Naive thymus-derived CD4-positive, alpha-beta T cell (primary cell): ENCODE measurements at regions of chr6 and their contacts with region 1.

Region 1: DNA sequence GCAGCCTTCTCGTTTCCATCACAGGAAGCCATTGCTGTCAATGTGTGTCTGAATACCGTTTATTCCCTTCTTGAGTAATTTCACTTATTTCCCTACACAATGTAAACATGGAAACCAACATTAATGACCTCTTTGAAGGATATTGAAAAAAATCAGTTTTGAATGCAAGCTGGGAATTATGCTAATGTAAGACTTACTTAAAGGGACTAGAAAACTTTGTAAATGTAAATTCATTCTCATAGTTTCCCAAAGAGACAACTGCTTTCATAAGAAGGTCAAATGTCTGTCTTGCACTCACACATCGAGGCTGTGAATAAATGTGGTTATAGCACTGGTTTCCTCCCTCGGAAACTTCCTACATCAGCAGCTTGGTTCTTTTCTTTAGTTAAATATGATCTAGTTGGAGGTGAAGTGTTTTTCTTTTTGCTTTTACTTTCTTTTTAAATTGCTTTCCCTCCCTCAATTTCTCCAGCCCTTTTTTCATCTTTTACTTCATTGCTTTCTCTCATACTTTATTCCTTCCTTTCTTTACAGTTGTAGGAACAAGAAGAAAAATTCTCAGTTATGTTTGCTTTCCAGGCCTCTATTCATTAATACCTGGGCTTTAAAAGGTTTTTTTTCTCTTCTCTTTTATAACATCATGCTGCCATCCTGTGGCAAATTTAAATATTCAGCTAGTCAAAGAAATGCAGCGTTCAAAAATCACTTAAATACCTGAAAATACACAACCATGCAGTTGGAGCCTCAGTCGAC is 108.3 kb downstream of the TNFAIP3 start:
- DNase-seq: peak in 7 of 9 donors; percentile 22 to 65 (median 51)
- ATAC-seq: peak; percentile 85
- H3K4me3 ChIP-seq: peak overlapping the region; percentile 5
- H3K4me3 Mint-ChIP-seq: peak overlapping the region; percentile 9 to 92 (median 78)
- H3K27ac ChIP-seq: peak overlapping the region; percentile 66
- H3K27ac Mint-ChIP-seq: peak overlapping the region; percentile 91 to 99 (median 94)
- H3K4me1 ChIP-seq: peaks cover 17 to 41% of the 10 kb centered on the region in 2 donors
- H3K4me1 Mint-ChIP-seq: peaks cover 23 to 55% (median 31%) of the 10 kb centered on the region in 7 donors
- H3K27me3 ChIP-seq: no peaks in the 10 kb centered on the region
- H3K27me3 Mint-ChIP-seq: no peaks in the 10 kb centered on the region

Region 2: DNA sequence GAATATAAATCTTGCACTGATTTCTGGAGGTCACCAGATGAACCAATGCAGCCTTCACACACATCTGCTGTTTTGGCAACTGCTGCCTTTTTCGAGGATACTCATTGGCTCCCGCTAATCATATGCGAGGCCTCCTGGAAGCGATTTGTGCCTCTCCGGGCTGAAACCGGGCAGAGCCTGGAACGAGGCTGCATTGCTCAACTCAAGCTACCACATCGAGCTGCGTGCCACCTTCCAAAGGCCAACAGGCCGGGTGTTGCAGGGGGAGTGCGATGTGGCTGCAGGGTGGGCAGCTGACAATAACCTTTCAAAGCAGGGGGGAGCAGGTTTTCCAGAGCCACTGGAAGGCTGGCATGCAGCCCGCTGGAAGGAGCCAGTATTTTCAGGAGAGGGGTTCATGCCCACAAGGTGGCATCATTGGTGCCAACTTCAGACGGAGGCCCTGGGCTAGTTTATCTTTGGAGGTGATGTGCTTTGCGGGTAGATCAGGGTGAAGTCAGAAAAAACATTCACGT is 633.6 kb before region 1 on chr6:
- CTCF ChIA-PET with region 1: no interaction called
- POLR2A ChIA-PET with region 1: no interaction called
- intact Hi-C with region 1: loop called in 1 of 2 experiments (anchors 5 kb)
- DNase-seq: peak in 8 of 9 donors; percentile 16 to 62 (median 48)
- ATAC-seq: peak; percentile 80
- H3K4me3 ChIP-seq: peak overlapping the region; percentile 24
- H3K4me3 Mint-ChIP-seq: peak overlapping the region in 9 of 10 donors; percentile 52 to 87 (median 77)
- H3K27ac ChIP-seq: no peak overlapping the region
- H3K27ac Mint-ChIP-seq: peak overlapping the region in 1 of 9 donors; percentile 76
- H3K4me1 ChIP-seq: peaks cover 5 to 10% of the 10 kb centered on the region in 2 donors
- H3K4me1 Mint-ChIP-seq: peaks cover 6 to 19% (median 17%) of the 10 kb centered on the region in 7 donors
- H3K27me3 ChIP-seq: no peaks in the 10 kb centered on the region
- H3K27me3 Mint-ChIP-seq: peaks cover 0 to 55% (median 0%) of the 10 kb centered on the region in 5 donors

Region 3: DNA sequence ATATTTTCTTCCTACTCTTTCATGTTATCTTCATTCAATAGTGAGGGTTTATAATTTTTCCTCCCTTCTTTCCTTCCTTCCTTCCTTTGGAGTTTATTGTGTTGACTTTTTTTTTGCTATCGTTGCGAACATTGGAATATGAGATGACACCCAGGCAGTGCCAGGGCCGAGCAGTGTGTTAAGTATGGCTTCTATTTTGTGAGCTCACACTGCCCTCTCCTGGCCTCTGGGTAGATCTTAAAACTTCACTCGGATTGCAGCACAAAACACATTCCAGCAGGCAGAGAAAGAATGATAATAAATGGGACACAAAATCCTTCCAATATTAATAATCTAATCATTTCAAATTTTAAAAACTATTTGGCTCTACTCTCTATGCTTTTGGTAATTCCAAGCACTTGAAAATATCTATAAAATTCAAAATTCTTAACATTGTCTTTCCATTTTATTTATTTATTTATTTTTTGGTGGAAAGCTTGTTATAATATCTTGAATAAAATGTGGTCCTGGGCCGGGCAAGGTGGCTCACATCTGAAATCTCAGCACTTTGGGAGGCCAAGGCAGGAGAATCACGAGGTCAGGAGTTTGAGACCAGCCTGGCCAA is 333.8 kb before region 1 on chr6:
- CTCF ChIA-PET with region 1: interaction called, 3 read pairs
- POLR2A ChIA-PET with region 1: no interaction called
- intact Hi-C with region 1: loop called in 1 of 2 experiments (anchors 1 kb)
- DNase-seq: peak; percentile 25 to 65 (median 57)
- ATAC-seq: peak; percentile 89
- H3K4me3 ChIP-seq: no peak overlapping the region
- H3K4me3 Mint-ChIP-seq: no peak overlapping the region
- H3K27ac ChIP-seq: no peak overlapping the region
- H3K27ac Mint-ChIP-seq: no peak overlapping the region
- H3K4me1 ChIP-seq: no peaks in the 10 kb centered on the region
- H3K4me1 Mint-ChIP-seq: peaks cover 0 to 17% (median 12%) of the 10 kb centered on the region in 7 donors
- H3K27me3 ChIP-seq: no peaks in the 10 kb centered on the region
- H3K27me3 Mint-ChIP-seq: peaks cover 0 to 13% (median 6%) of the 10 kb centered on the region in 5 donors

Region 4: GRCh38 chr6:137823826-137824555 is 151.4 kb before region 1 on chr6:
- CTCF ChIA-PET with region 1: no interaction called
- POLR2A ChIA-PET with region 1: no interaction called
- intact Hi-C with region 1: loop called in 1 of 2 experiments (anchors 1 kb)
- DNase-seq: peak; percentile 59 to 100 (median 95)
- ATAC-seq: peak; percentile 87
- H3K4me3 ChIP-seq: peak overlapping the region; percentile 33
- H3K4me3 Mint-ChIP-seq: peak overlapping the region; percentile 72 to 86 (median 79)
- H3K27ac ChIP-seq: peak overlapping the region; percentile 99
- H3K27ac Mint-ChIP-seq: peak overlapping the region; percentile 96 to 100 (median 100)
- H3K4me1 ChIP-seq: peaks cover 43 to 76% of the 10 kb centered on the region in 2 donors
- H3K4me1 Mint-ChIP-seq: peaks cover 48 to 98% (median 93%) of the 10 kb centered on the region in 7 donors
- H3K27me3 ChIP-seq: no peaks in the 10 kb centered on the region
- H3K27me3 Mint-ChIP-seq: no peaks in the 10 kb centered on the region

Region 5: DNA sequence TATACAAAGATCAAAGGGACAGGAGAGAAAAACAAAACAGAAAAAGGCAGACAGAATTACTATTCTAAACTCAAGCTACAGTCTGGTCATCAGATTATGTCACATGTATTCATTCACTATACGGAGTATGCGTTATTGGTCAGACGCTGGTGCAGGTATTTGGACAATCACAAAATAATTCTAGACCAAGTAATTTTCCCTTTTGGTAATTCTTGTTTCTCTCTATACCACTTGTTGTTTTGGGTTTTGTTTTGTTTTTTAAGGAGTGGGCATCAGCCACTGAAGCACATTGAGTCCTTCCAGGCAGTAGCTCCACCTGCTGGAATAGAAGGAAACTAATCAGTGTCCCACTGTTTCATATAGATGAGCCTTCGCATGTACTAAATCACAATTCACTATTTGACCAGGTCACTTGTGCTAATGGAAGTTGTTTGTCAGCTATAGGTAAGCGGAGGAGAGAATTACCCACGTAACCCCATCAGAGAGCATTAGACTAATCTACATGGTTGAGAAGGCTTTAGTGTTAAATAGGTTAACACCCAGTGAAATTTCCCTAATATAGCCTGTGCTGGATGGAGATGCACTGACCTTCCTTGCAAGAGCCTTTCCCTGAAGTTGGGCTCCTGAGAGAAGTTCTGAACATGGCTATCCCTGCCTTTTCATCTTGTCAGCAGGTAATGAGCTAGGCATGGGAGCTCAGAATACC is 30.4 kb before region 1 on chr6:
- CTCF ChIA-PET with region 1: interaction called, 11 read pairs
- POLR2A ChIA-PET with region 1: no interaction called
- intact Hi-C with region 1: loop called (anchors 1 kb)
- DNase-seq: peak in 6 of 9 donors; percentile 7 to 52 (median 39)
- ATAC-seq: peak; percentile 88
- H3K4me3 ChIP-seq: no peak overlapping the region
- H3K4me3 Mint-ChIP-seq: no peak overlapping the region
- H3K27ac ChIP-seq: no peak overlapping the region
- H3K27ac Mint-ChIP-seq: peak overlapping the region in 3 of 9 donors; percentile 45 to 76 (median 59)
- H3K4me1 ChIP-seq: peaks cover 1 to 7% of the 10 kb centered on the region in 2 donors
- H3K4me1 Mint-ChIP-seq: peaks cover 4 to 48% (median 18%) of the 10 kb centered on the region in 7 donors
- H3K27me3 ChIP-seq: no peaks in the 10 kb centered on the region
- H3K27me3 Mint-ChIP-seq: no peaks in the 10 kb centered on the region

Region 6: DNA sequence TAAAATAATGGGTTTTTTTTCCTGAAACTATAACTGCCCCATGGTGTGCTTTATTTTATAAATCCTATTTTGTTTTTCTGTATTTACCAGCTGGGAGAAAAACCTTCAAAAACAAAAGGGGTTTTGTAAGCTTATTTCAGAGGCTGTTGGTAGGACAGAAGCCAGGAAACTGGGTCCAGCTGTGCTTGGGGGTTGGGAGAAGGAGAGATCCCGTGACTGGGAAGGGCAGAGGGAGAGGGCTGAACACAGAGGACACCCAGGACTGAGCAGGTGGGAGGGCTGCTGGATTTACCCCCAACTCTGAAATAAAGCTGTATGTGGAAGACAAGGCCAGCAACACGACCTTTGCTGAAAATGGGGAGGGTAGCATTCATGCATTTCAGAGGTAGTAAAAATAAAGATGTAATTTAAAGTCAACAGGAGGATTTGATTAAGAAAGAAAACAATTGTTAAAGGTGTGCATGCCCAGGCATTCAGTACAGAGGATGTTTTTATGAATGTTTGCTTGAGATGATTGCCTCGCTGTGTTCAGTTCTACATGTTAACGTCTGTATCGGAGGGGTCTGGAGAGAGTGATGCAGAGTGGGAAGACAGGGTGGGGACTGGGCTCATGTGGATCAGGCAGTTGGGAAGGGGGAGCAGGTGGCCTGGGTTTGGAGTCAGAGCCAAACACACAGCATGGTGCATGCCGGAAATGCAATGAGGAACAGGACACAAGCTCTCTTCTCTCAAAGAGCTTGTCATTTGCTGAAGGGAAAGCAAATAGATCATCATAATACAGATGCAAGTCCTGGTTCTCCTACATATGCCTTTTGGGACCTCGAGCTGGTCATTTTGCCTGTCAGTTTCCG is 207.8 kb after region 1 on chr6:
- CTCF ChIA-PET with region 1: no interaction called
- POLR2A ChIA-PET with region 1: no interaction called
- intact Hi-C with region 1: no loop called
- DNase-seq: no peak
- ATAC-seq: no peak
- H3K4me3 ChIP-seq: no peak overlapping the region
- H3K4me3 Mint-ChIP-seq: no peak overlapping the region
- H3K27ac ChIP-seq: no peak overlapping the region
- H3K27ac Mint-ChIP-seq: no peak overlapping the region
- H3K4me1 ChIP-seq: no peaks in the 10 kb centered on the region
- H3K4me1 Mint-ChIP-seq: no peaks in the 10 kb centered on the region
- H3K27me3 ChIP-seq: no peaks in the 10 kb centered on the region
- H3K27me3 Mint-ChIP-seq: peaks cover 8 to 40% (median 27%) of the 10 kb centered on the region in 5 donors